Naive thymus-derived CD4-positive, alpha-beta T cell (primary cell): ENCODE measurements at regions of chr1 and their contacts with region 1.

Region 1: GRCh38 chr1:21368515-21369289 is 71.2 kb upstream of the NBPF3 start:
- DNase-seq: peak; percentile 16 to 69 (median 50)
- ATAC-seq: peak; percentile 83
- H3K4me3 ChIP-seq: no peak overlapping the region
- H3K4me3 Mint-ChIP-seq: peak overlapping the region in 1 of 10 donors; percentile 15
- H3K27ac ChIP-seq: no peak overlapping the region
- H3K27ac Mint-ChIP-seq: peak overlapping the region in 4 of 9 donors; percentile 7 to 63 (median 51)
- H3K4me1 ChIP-seq: peaks cover 0 to 3% of the 10 kb centered on the region in 2 donors
- H3K4me1 Mint-ChIP-seq: peaks cover 6 to 16% (median 7%) of the 10 kb centered on the region in 7 donors
- H3K27me3 ChIP-seq: no peaks in the 10 kb centered on the region
- H3K27me3 Mint-ChIP-seq: peaks cover 0 to 3% (median 0%) of the 10 kb centered on the region in 5 donors

Region 2: GRCh38 chr1:21232044-21232443 is 136.7 kb before region 1 on chr1:
- CTCF ChIA-PET with region 1: interaction called, 124 read pairs
- POLR2A ChIA-PET with region 1: no interaction called
- intact Hi-C with region 1: loop called (anchors 1 kb)
- DNase-seq: peak in 6 of 9 donors; percentile 20 to 53 (median 42)
- ATAC-seq: peak; percentile 76
- H3K4me3 ChIP-seq: no peak overlapping the region
- H3K4me3 Mint-ChIP-seq: no peak overlapping the region
- H3K27ac ChIP-seq: no peak overlapping the region
- H3K27ac Mint-ChIP-seq: peak overlapping the region in 2 of 9 donors; percentile 8 to 29
- H3K4me1 ChIP-seq: no peaks in the 10 kb centered on the region
- H3K4me1 Mint-ChIP-seq: no peaks in the 10 kb centered on the region
- H3K27me3 ChIP-seq: no peaks in the 10 kb centered on the region
- H3K27me3 Mint-ChIP-seq: no peaks in the 10 kb centered on the region

Region 3: DNA sequence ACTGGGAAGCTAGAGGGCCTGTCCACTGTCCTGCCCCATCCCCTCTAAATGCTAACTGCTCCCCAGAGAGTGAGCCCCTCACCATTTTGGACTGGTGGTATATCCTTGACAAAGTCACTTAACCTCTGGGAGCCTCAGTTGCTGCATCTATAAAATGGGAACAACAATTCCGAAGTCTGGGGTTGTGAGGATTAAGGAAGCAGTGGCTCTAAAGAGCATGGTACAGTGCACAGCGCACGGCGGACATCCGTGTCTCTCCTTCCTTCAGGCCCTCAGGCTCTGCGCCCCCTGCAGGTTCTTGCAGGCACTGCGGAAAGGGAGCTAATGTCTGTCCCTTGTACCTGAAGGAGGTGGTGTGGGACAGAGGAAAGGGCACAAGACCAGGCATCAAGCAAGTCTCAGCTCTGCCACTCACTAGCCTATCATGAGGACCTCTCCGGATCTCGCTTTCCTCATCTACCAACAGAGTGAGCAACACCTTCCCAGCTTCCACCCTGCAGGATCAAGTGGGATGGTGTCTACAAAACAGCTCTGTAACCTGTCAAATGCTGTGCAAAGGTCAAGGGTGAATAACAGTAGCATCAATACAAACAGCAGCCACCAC is 98.5 kb before region 1 on chr1:
- CTCF ChIA-PET with region 1: interaction called, 38 read pairs
- POLR2A ChIA-PET with region 1: interaction called, 6 read pairs
- intact Hi-C with region 1: loop called in 1 of 2 experiments (anchors 1 kb)
- DNase-seq: peak; percentile 67 to 87 (median 80)
- ATAC-seq: peak; percentile 95
- H3K4me3 ChIP-seq: no peak overlapping the region
- H3K4me3 Mint-ChIP-seq: peak overlapping the region in 2 of 10 donors; percentile 6 to 48
- H3K27ac ChIP-seq: no peak overlapping the region
- H3K27ac Mint-ChIP-seq: peak overlapping the region; percentile 8 to 80 (median 48)
- H3K4me1 ChIP-seq: peaks cover 0 to 18% of the 10 kb centered on the region in 2 donors
- H3K4me1 Mint-ChIP-seq: peaks cover 13 to 34% (median 18%) of the 10 kb centered on the region in 7 donors
- H3K27me3 ChIP-seq: no peaks in the 10 kb centered on the region
- H3K27me3 Mint-ChIP-seq: no peaks in the 10 kb centered on the region

Region 4: DNA sequence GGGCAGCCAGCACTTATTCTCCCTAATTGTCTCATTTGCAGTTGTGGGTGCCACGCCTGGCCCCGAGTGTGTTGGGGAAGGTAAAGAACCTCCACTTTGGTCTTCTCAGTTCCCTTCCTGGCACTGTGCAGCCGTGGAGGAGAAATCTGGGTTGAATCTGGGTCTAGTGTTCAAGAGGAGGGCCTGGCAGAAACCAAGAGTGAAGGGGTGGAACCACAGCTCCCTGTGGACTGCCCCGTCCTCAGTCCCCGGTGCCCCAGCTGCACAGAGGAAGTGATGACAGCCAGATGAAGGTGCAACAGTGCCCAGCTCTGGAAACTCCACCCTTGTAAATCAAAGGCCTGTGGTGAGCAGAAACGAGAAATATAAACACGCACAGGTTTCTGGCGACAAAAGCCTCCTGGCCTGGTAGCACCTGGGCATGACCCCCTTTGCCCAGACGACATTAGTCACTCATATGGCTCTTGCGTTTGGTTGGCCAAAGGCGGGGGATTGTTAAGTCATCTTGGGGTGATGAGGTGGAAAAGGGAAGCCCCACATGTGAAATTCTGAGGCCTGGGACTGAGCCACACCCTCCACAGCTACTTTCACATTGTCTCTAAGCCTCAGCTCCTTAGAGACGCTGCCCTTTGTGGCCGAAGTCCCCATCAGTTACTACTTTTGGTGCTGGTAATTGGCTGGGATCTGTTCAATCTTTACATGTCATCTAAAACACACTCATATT is 74.3 kb before region 1 on chr1:
- CTCF ChIA-PET with region 1: interaction called, 15 read pairs
- POLR2A ChIA-PET with region 1: interaction called, 6 read pairs
- intact Hi-C with region 1: loop called in 1 of 2 experiments (anchors 2 kb)
- DNase-seq: peak; percentile 57 to 95 (median 91)
- ATAC-seq: peak; percentile 87
- H3K4me3 ChIP-seq: peak overlapping the region; percentile 69
- H3K4me3 Mint-ChIP-seq: peak overlapping the region; percentile 81 to 97 (median 93)
- H3K27ac ChIP-seq: peak overlapping the region; percentile 94
- H3K27ac Mint-ChIP-seq: peak overlapping the region; percentile 91 to 100 (median 98)
- H3K4me1 ChIP-seq: peaks cover 60 to 62% of the 10 kb centered on the region in 2 donors
- H3K4me1 Mint-ChIP-seq: peaks cover 50 to 91% (median 84%) of the 10 kb centered on the region in 7 donors
- H3K27me3 ChIP-seq: no peaks in the 10 kb centered on the region
- H3K27me3 Mint-ChIP-seq: no peaks in the 10 kb centered on the region

Region 5: DNA sequence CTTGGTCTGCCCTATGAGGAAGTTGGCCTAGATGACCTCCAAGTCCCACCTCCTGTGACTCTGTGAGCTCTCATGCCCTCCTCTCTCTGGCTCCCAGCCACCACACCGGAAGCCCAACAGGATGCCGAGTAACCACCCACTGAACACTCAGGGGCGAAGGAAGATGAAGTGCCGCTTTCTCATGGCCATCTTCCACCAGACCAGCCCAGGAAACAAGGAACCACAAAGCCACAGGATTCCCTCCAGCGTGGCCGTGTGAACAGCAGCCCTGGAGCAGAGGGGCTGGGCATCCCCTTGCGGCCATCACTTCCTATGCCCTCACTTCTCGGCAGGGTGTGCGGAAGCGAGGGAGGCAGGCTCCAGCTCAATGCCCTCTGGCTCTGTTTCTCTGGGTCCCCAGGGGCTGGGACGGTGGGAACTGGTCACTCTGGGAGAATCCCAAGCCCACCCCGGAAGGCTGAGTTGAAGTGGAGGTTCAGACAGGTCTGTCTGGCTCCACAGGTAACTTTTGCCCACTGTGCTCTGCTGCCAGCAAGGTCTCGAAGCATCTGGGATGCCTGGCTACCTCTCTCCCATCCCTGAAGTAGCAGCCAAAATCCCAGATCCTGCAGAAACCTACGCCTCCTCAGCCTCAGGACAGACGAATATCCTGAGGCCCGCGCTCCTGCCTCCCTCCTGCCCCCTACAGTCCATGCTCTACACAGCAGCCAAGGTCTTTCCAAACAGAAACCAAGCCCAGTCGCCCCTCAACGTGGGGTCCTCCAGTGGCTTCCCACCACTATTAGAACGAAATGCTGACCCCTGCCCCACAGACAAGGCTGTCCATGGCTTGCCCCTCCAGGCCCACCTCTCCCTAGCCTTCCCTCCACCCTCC is 34.3 kb before region 1 on chr1:
- CTCF ChIA-PET with region 1: interaction called, 10 read pairs
- POLR2A ChIA-PET with region 1: no interaction called
- intact Hi-C with region 1: loop called in 1 of 2 experiments (anchors 2 kb)
- DNase-seq: peak; percentile 58 to 84 (median 76)
- ATAC-seq: peak; percentile 88
- H3K4me3 ChIP-seq: peak overlapping the region; percentile 74
- H3K4me3 Mint-ChIP-seq: peak overlapping the region; percentile 82 to 97 (median 91)
- H3K27ac ChIP-seq: peak overlapping the region; percentile 81
- H3K27ac Mint-ChIP-seq: peak overlapping the region; percentile 92 to 99 (median 97)
- H3K4me1 ChIP-seq: peaks cover 41 to 78% of the 10 kb centered on the region in 2 donors
- H3K4me1 Mint-ChIP-seq: peaks cover 55 to 95% (median 85%) of the 10 kb centered on the region in 7 donors
- H3K27me3 ChIP-seq: no peaks in the 10 kb centered on the region
- H3K27me3 Mint-ChIP-seq: no peaks in the 10 kb centered on the region

Region 6: GRCh38 chr1:21659099-21659923 is 290.6 kb after region 1 on chr1:
- CTCF ChIA-PET with region 1: no interaction called
- POLR2A ChIA-PET with region 1: no interaction called
- intact Hi-C with region 1: loop called in 1 of 2 experiments (anchors 1 kb)
- DNase-seq: peak; percentile 73 to 91 (median 81)
- ATAC-seq: peak; percentile 99
- H3K4me3 ChIP-seq: peak overlapping the region; percentile 40
- H3K4me3 Mint-ChIP-seq: peak overlapping the region in 7 of 10 donors; percentile 18 to 66 (median 42)
- H3K27ac ChIP-seq: no peak overlapping the region
- H3K27ac Mint-ChIP-seq: peak overlapping the region in 1 of 9 donors; percentile 56
- H3K4me1 ChIP-seq: peaks cover 6% of the 10 kb centered on the region in 2 donors
- H3K4me1 Mint-ChIP-seq: peaks cover 0 to 9% (median 7%) of the 10 kb centered on the region in 7 donors
- H3K27me3 ChIP-seq: no peaks in the 10 kb centered on the region
- H3K27me3 Mint-ChIP-seq: peaks cover 14 to 30% (median 16%) of the 10 kb centered on the region in 5 donors